SK-N-SH (cell line): ENCODE measurements at regions of chr22 and their contacts with region 1.

Region 1: GRCh38 chr22:20111045-20111688 is 4.7 kb upstream of the RANBP1 start:
- DNase-seq: peak; percentile 87
- H3K4me3 ChIP-seq: no peak overlapping the region
- H3K27ac ChIP-seq: peak overlapping the region; percentile 7 to 28; a peak in 3 of 4 replicates
- H3K4me1 ChIP-seq: peaks cover 6 to 11% of the 10 kb centered on the region in 2 experiments; a peak in 1 of 4 replicates
- H3K27me3 ChIP-seq: no peaks in the 10 kb centered on the region
- CTCF ChIP-seq: peak; percentile 61
- EP300 ChIP-seq: no peak
- RAD21 ChIP-seq: 0 out of 2 replicates have a peak, but pooled peaks have one; percentile 12

Region 2: DNA sequence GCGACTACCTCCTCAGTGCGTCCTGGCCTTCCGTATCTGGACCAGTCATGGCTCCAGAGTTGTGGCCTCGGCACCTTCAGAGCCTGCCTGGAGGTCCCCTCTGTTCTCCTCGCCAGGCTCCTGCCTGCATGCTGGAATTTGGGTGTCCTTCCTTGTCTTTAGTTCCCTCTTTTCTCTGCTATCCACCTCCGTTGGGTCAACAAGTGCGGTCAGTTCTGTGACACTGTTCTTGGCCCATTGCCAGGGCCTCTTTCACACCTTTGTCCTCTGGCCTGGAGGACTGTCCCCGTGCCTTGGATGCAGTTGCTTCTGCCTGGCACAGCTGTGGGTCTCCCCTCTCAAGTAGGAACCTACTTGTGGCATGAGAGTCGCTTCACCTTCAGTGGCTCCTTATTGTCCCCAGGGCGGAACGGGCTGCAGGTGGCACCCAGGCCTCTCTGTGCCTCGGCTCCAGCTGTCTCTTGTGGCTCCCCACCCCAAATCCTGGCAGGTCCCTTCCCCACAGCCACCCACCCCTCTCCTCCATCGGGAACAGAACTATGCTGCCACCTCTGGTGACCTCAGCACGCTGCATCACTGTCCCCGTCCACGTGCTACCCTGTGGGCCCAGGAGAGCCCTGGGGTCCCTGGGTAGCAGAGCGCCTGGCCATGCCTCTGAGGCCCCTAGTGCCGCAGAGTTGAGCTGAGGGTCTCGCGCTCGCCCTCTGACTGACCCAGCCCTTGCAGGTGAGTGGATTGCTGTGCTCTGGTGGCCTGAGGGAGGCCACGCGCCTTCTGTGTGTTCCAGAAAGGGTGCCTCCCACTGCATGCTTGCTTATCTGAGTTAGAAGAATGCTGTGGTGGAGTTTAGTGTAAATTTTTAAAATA is 26.4 kb before region 1 on chr22:
- CTCF ChIA-PET with region 1: interaction called, 10 read pairs
- POLR2A ChIA-PET with region 1: interaction called, 4 read pairs
- DNase-seq: peak; percentile 88
- H3K4me3 ChIP-seq: no peak overlapping the region; a peak in 1 of 4 replicates
- H3K27ac ChIP-seq: peak overlapping the region in 1 of 2 experiments; percentile 39; a peak in 1 of 4 replicates
- H3K4me1 ChIP-seq: peaks cover 7 to 27% of the 10 kb centered on the region in 2 experiments; a peak in 1 of 4 replicates
- H3K27me3 ChIP-seq: no peaks in the 10 kb centered on the region
- CTCF ChIP-seq: peak; percentile 51
- EP300 ChIP-seq: no peak
- RAD21 ChIP-seq: peak; percentile 52